ENCODE measurements at regions of chr15 and their contacts with region 1.

Region 1: GRCh38 chr15:90482124-90483011 is 47.4 kb upstream of the CRTC3 start:
- DNase-seq: peak; percentile 62
- ATAC-seq: peak; percentile 74
- H3K4me3 Mint-ChIP-seq: no peak overlapping the region
- H3K27ac Mint-ChIP-seq: no peak overlapping the region
- H3K4me1 Mint-ChIP-seq: peaks cover 25% of the 10 kb centered on the region
- H3K27me3 Mint-ChIP-seq: no peaks in the 10 kb centered on the region
- CTCF ChIP-seq: peak; percentile 74

Region 2: GRCh38 chr15:90300988-90301706 is 181.2 kb before region 1 on chr15:
- CTCF ChIA-PET with region 1: interaction called, 13 read pairs
- POLR2A ChIA-PET with region 1: no interaction called
- intact Hi-C with region 1: no loop called
- DNase-seq: peak; percentile 82
- ATAC-seq: peak; percentile 82
- H3K4me3 Mint-ChIP-seq: no peak overlapping the region
- H3K27ac Mint-ChIP-seq: no peak overlapping the region
- H3K4me1 Mint-ChIP-seq: peaks cover 30% of the 10 kb centered on the region
- H3K27me3 Mint-ChIP-seq: peaks cover under 1% of the 10 kb centered on the region
- CTCF ChIP-seq: peak; percentile 89

Region 3: DNA sequence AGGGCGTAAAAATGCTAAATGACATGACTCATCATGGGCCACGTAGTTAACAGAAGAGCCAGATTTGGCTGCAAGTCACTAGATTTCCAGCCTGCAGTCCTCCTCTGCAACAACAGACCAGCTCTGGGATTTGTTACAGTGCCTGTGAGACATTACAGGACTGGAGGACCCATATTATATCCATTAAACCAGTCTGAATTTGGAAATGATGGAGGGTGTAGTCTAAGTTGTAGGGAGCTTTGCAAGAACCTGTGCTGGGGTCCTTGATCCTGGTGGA is 119.5 kb before region 1 on chr15:
- CTCF ChIA-PET with region 1: interaction called, 65 read pairs
- POLR2A ChIA-PET with region 1: interaction called, 3 read pairs
- intact Hi-C with region 1: loop called (anchors 1 kb)
- DNase-seq: no peak
- ATAC-seq: no peak
- H3K4me3 Mint-ChIP-seq: no peak overlapping the region
- H3K27ac Mint-ChIP-seq: no peak overlapping the region
- H3K4me1 Mint-ChIP-seq: peaks cover 25% of the 10 kb centered on the region
- H3K27me3 Mint-ChIP-seq: no peaks in the 10 kb centered on the region
- CTCF ChIP-seq: no peak

Region 4: DNA sequence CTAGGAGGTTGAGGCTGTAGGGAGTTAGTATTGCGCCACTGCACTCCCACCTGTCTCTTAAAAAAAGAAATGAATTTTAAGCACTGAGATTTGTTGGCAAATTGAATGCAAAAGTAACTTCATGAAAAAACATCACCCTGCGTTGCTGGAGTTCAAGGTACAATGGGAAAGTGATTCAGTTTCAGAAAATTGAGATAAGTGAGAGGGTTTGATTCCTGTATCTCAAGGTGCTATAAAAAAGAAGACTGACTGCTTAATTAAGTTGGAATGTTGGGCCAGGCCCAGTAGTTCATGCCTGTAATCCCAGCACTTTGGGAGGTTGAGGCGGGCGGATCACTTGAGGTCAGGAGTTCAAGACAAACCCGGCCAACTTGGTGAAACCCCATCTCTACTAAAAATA is 55.2 kb before region 1 on chr15:
- CTCF ChIA-PET with region 1: no interaction called
- POLR2A ChIA-PET with region 1: no interaction called
- intact Hi-C with region 1: no loop called
- DNase-seq: no peak
- ATAC-seq: no peak
- H3K4me3 Mint-ChIP-seq: no peak overlapping the region
- H3K27ac Mint-ChIP-seq: no peak overlapping the region
- H3K4me1 Mint-ChIP-seq: peaks cover 26% of the 10 kb centered on the region
- H3K27me3 Mint-ChIP-seq: no peaks in the 10 kb centered on the region
- CTCF ChIP-seq: no peak

Region 5: DNA sequence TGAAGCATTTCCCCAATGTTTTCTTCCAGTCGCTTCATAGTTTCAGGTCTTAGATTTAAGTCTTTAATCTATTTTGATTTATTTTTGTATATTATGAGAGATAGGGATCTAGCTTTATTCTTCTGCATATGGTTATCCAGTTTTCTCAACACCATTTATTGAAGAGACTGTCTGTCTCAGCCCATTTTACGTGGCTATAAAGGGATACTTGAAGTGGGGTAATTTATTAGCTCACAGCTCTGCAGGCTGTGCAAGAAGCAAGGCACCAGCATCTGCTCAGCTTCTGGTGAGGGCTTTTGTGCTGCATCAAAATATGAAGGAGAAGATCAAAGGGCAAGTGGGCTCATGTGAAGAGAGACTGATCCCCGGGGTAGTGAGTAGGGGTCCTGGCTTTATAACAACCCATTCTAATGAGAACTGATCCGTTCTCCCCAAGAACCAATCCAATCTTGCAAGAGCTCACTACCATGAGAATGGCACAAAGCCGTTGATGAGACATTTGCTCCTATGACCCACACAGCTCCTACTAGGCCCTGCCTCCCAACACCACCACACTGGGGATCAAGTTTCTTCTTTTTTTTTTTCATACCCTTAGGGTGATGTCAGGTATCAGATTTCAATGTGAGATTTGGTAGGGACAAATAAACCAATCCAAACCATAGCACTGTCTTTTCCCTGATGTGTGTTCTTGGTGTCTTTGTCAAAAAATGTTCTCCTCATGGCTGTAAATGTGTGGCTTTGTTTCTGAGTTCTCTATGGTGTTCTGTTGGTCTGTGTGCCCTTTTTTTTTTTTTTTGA is 31.1 kb before region 1 on chr15:
- CTCF ChIA-PET with region 1: interaction called, 14 read pairs
- POLR2A ChIA-PET with region 1: no interaction called
- intact Hi-C with region 1: no loop called
- DNase-seq: no peak
- ATAC-seq: no peak
- H3K4me3 Mint-ChIP-seq: no peak overlapping the region
- H3K27ac Mint-ChIP-seq: peak overlapping the region; percentile 10
- H3K4me1 Mint-ChIP-seq: no peaks in the 10 kb centered on the region
- H3K27me3 Mint-ChIP-seq: no peaks in the 10 kb centered on the region
- CTCF ChIP-seq: no peak

Region 6: DNA sequence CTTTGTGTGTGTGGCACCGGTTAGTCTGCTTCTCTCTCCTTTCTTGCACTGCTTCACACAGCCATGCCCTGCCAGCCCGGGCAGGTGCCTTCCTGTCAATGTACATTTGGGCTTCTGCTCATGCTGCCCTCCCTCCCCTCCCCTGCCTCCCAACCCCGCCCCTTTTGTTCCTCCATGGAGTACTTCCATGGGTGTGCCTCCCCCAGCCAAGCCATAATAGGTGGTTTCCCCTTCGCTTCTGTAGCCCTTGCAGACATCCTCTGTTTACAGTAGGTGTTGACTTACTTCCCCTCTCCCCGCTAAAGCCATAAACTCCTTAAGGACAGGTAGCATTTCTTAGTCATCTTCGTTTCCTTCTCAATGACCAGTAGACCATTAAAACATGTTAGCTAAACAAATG is 15.5 kb after region 1 on chr15:
- CTCF ChIA-PET with region 1: interaction called, 21 read pairs
- POLR2A ChIA-PET with region 1: interaction called, 3 read pairs
- intact Hi-C with region 1: no loop called
- DNase-seq: no peak
- ATAC-seq: no peak
- H3K4me3 Mint-ChIP-seq: no peak overlapping the region
- H3K27ac Mint-ChIP-seq: no peak overlapping the region
- H3K4me1 Mint-ChIP-seq: peaks cover 8% of the 10 kb centered on the region
- H3K27me3 Mint-ChIP-seq: no peaks in the 10 kb centered on the region
- CTCF ChIP-seq: no peak